Endothelial cell of umbilical vein (primary cell): ENCODE measurements at regions of chr9 and their contacts with region 1.

Region 1: DNA sequence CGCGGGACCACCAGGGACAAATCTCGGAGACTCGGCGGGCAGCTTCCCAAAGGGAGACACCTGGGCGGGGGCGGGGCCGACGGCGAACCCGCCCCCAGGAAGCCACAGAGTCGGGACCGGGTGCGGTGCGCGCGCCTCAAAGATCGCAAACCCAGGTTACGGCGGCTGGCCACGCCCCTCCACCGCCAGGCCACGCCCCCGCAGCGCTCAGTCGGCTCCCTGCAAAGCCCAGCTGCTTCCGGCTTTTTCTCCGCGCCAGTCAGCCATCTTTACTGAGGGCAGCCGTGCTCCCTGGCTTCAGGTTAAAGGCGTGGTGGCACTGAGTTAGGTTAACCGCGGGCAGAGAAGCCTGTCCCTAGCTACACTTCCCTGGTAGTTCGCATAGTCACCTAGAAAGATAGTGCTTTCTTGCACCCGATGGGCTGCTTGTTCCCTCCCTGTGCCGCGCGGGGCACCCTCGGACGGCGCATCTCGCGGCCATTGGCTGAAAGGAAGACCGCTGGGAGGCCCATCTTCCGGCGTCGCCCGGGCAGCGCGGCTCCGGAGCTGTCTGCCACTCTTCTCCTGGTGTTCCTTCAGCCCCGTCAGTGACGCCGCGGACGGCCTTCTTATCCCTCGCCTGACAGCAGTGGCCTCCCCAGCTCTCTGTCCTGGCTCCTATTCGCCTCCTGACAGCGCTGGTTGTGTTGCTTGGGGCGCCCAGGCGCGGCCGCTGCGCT is at the start of gene TBC1D2:
- DNase-seq: peak; percentile 94
- H3K4me3 ChIP-seq: peak within 1 kb of the TSS; percentile 67 to 81 (median 80)
- H3K27ac ChIP-seq: peak within 1 kb of the TSS; percentile 75
- H3K4me1 ChIP-seq: peaks cover 22% of the 10 kb centered on the region
- H3K27me3 ChIP-seq: no peaks in the 10 kb centered on the region
- CTCF ChIP-seq: peak in 1 of 2 donors; percentile 24
- POLR2A ChIP-seq: peak; percentile 64
- total RNA-seq, gene TBC1D2: 3.4 and 3.6 TPM in 2 replicates

Region 2: GRCh38 chr9:98087420-98088354 is 168.1 kb before region 1 on chr9:
- CTCF ChIA-PET with region 1: no interaction called
- POLR2A ChIA-PET with region 1: no interaction called
- dilution Hi-C with region 1: no loop called
- intact Hi-C with region 1: loop called (anchors 2 kb)
- DNase-seq: peak; percentile 76
- H3K4me3 ChIP-seq: peak overlapping the region in 2 of 3 experiments; percentile 24 to 42
- H3K27ac ChIP-seq: no peak overlapping the region
- H3K4me1 ChIP-seq: peaks cover 3% of the 10 kb centered on the region
- H3K27me3 ChIP-seq: no peaks in the 10 kb centered on the region
- CTCF ChIP-seq: no peak
- POLR2A ChIP-seq: no peak

Region 3: DNA sequence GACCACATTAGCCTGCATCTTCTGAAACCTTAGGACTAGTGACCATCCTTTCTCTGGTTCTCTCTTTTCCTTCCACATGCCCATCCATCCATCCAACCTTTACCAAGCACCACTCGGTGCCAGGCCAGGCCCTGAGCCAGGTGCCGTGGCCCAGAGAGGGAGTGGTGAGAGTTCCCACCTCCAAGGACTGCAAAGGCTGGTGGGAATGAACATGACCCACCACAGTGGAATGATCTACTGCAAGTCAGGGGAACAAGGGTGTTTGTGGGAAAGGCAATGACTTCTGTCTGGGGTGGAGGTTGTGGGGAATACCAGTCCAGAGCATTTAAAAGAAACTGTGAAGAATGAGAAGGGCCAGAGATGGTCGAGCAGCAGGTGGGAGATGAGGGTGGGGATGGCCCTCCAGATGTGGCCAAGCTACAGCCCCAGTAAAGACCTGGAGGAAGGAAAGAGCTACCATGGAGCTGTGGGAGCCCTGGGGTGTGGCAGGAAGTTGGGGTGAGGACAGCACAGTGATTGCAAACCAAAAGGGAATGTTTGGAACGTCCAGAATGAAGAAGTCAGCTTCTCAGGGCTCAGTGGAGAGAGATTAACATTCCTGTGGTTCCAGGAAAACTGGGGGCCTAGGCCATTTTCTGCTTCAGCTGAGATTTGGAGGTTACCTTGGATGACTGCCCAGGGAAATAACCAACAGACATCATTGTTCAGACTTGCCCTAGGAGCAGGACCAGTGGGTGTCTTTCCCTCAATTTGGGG is 32.7 kb before region 1 on chr9:
- CTCF ChIA-PET with region 1: interaction called, 16 read pairs
- POLR2A ChIA-PET with region 1: no interaction called
- dilution Hi-C with region 1: no loop called
- intact Hi-C with region 1: no loop called
- DNase-seq: peak; percentile 32
- H3K4me3 ChIP-seq: no peak overlapping the region
- H3K27ac ChIP-seq: peak overlapping the region; percentile 75
- H3K4me1 ChIP-seq: peaks cover 15% of the 10 kb centered on the region
- H3K27me3 ChIP-seq: no peaks in the 10 kb centered on the region
- CTCF ChIP-seq: no peak
- POLR2A ChIP-seq: peak; percentile 41